GM10248 (cell line): ENCODE measurements at regions of chr1 and their contacts with region 1.

Region 1: GRCh38 chr1:40032240-40032891 is 8.2 kb upstream of the CAP1 start:
- DNase-seq: peak; percentile 57
- CTCF ChIP-seq: peak; percentile 81

Region 2: GRCh38 chr1:39754906-39755504 is 277.4 kb before region 1 on chr1:
- CTCF ChIA-PET with region 1: no interaction called
- POLR2A ChIA-PET with region 1: no interaction called
- DNase-seq: no peak
- CTCF ChIP-seq: no peak

Region 3: DNA sequence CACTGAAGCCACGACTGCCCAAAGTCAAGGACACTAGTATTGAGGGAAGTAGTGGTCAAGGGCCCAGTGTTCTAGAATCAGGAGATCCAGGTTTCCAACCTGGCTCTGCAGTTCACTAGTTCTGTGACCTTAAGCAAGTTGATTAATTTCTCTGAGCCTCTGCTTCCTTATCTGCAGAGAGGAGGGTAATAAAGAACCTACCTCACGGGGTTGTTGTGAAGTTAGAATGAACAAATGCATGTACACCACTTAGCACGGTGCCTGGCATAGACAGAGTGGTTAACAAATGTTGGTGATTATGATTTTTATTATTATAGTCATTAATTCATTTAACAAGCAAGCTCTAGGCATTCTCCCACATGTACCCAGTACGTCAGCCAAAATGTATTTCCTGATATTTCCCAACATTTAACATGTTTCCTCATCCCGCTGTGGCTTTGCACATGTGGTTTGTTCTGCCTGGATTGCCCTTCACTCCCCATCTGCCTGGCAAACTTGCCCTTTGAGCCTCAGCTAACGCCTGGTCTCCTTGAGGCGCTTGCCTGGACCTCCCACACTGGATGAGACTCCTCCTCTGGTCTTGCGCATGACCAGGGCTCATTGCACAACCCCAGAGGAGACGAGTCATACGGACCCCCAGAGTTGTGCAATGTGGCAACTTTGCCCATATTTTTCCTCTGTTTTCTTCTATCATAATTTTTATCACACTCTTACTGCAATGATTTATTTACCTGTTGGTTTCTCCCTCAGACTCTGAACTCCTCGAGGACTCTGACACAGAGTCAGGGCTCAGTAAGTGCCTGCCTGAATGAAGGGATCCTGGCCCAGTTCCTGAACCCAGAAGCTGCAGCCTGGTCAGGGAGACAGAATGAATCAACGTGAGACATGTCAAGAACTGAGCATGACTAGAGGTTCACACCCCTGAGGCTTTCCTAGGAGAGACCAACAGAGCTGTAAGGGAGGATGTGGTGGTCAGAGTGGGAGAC is 98.1 kb before region 1 on chr1:
- CTCF ChIA-PET with region 1: interaction called, 10 read pairs
- POLR2A ChIA-PET with region 1: no interaction called
- DNase-seq: no peak
- CTCF ChIP-seq: no peak

Region 4: DNA sequence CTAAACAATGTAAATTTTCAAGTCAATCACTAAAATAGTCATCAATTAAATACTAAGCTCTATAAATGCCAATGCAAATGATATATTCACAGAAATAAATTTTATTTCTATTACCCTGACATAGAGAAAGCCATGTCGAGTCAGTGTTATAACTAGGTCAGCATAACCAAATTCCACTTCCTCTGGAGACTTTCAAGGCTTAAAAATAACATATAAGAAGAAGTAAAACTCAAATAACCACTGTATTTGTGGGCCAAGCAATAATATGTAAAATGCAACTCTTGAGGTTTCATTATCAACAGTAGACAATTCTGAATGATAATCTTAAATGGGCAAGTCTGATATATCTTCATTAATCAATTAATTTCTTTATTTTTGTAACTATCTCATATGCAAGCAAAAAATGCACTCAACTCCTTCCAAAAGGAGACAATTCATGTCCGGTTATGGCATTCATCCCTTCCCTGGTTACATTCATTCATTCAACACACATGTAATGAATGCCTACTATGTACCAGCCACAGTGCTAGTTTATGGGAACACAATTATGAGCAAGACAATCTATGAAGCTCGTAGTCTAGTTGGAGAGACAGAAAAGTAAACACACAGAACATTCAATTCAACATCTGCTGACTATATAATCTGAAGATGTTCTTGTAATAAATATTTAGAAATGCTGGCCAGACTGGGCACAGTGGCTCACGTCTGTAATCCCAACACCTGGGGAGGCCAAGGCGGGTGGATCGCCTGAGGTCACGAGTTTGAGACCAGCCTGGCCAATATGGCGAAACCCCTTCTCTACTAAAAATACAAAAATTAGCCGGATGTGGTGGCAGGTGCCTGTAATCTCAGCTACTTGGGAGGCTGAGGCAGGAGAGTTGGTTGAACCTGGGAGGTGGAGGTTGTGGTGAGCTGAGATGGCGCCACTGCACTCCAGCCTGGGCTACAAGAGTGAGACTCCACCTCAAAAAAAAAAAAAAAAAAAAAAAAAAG is 28.9 kb before region 1 on chr1:
- CTCF ChIA-PET with region 1: interaction called, 26 read pairs
- POLR2A ChIA-PET with region 1: interaction called, 3 read pairs
- DNase-seq: peak; percentile 61
- CTCF ChIP-seq: no peak

Region 5: GRCh38 chr1:40020447-40021085 is 11.8 kb before region 1 on chr1:
- CTCF ChIA-PET with region 1: interaction called, 12 read pairs
- POLR2A ChIA-PET with region 1: no interaction called
- DNase-seq: peak; percentile 25
- CTCF ChIP-seq: no peak

Region 6: DNA sequence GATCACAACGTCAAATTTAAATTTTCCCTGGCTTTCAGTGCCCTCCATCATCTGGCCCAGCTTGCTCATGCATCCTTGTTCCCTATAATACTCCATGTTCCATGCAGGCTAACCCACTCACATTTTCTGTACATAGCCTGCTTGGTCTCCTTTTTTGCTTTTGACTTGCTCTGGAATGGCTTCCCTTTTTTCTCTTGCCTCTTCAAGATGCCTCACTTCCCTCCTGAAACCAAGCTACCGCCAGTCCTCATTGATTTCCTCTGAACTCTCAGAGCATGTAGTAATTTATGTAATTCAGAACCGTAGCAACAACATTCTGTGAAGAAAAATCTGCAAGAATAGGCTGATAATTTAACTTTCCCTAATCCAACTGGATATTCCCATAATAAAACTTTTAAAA is 18.5 kb after region 1 on chr1:
- CTCF ChIA-PET with region 1: no interaction called
- POLR2A ChIA-PET with region 1: no interaction called
- DNase-seq: no peak
- CTCF ChIP-seq: no peak